ENCODE measurements at regions of chr17 and their contacts with region 1.

Region 1: GRCh38 chr17:50148226-50149090 is 2.0 kb downstream of the PPP1R9B start:
- DNase-seq: peak; percentile 51
- ATAC-seq: peak; percentile 23
- H3K4me3 ChIP-seq: peak overlapping the region; percentile 70 to 86 (median 84)
- H3K27ac ChIP-seq: peak overlapping the region; percentile 95
- H3K4me1 ChIP-seq: peaks cover 57% of the 10 kb centered on the region
- H3K27me3 ChIP-seq: no peaks in the 10 kb centered on the region; a peak in 2 of 5 replicates
- CTCF ChIP-seq: peak; percentile 48
- EP300 ChIP-seq: no peak
- POLR2A ChIP-seq: peak in 1 of 2 experiments; percentile 15; a peak in 1 of 4 replicates
- RAD21 ChIP-seq: no peak

Region 2: DNA sequence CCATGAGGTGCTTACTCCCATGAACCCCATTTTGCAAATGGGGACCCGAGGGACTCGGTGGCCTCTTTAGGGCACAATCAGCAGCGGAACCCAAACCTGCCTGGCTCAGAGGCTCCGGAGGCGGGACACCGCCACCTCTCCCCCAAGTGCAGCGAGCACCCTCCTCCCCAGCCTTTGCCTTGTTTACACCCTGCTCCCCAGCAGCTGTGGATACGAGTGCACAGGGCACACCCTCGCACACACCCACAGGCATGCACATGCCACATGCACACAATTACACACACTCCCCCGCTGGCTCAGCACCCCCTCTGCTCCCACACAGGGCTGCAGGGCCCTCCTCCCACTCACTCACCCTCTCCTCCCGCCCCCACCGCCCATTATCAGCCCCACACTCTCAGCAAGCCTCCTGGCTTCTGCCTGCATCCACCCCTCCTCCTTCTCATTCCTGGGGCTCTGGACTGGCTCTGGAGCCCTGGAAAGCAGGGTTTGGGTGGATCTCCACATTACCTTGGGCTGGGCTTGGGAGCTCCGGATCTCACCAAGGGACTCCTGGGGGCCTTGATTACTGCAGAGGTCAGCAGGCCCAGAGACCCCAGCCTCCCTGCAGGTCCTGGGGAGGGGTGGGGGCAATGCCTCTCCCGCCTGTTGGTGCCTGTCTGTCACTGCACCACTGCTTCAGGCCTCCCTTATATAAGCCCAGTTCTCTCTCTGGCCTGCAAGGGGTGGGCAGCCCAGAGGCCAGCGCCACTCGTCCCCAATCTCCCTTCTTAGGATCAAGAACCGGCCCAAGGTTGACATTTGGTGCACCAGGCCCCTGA is 46.9 kb before region 1 on chr17:
- CTCF ChIA-PET with region 1: no interaction called
- POLR2A ChIA-PET with region 1: interaction called, 10 read pairs
- in situ Hi-C with region 1: no loop called
- intact Hi-C with region 1: no loop called
- DNase-seq: no peak
- ATAC-seq: peak; percentile 78
- H3K4me3 ChIP-seq: peak overlapping the region in 2 of 3 experiments; percentile 27 to 49; a peak in 4 of 6 replicates
- H3K27ac ChIP-seq: peak overlapping the region; percentile 68
- H3K4me1 ChIP-seq: peaks cover 40% of the 10 kb centered on the region
- H3K27me3 ChIP-seq: no peaks in the 10 kb centered on the region
- CTCF ChIP-seq: no peak
- EP300 ChIP-seq: no peak
- POLR2A ChIP-seq: 0 out of 4 replicates have a peak, but pooled peaks of 1 of the 2 experiments have one; percentile 17
- RAD21 ChIP-seq: no peak

Region 3: GRCh38 chr17:51378059-51378458 is 1229.6 kb after region 1 on chr17:
- CTCF ChIA-PET with region 1: no interaction called
- POLR2A ChIA-PET with region 1: no interaction called
- in situ Hi-C with region 1: no loop called
- intact Hi-C with region 1: no loop called
- DNase-seq: no peak
- ATAC-seq: no peak
- H3K4me3 ChIP-seq: no peak overlapping the region
- H3K27ac ChIP-seq: no peak overlapping the region
- H3K4me1 ChIP-seq: no peaks in the 10 kb centered on the region
- H3K27me3 ChIP-seq: peaks cover 0 to 8% of the 10 kb centered on the region in 2 experiments; a peak in 1 of 5 replicates
- CTCF ChIP-seq: no peak
- EP300 ChIP-seq: no peak
- POLR2A ChIP-seq: no peak
- RAD21 ChIP-seq: no peak

Measured in HepG2 (cell line).